ENCODE measurements at regions of chr1 and their contacts with region 1.

Region 1: GRCh38 chr1:40404670-40405462 is 31.3 kb downstream of the SMAP2 start:
- DNase-seq: peak; percentile 75
- H3K4me3 ChIP-seq: no peak overlapping the region
- H3K27ac ChIP-seq: no peak overlapping the region
- H3K4me1 ChIP-seq: no peaks in the 10 kb centered on the region
- H3K27me3 ChIP-seq: no peaks in the 10 kb centered on the region
- CTCF ChIP-seq: peak; percentile 56 to 62
- POLR2A ChIP-seq: no peak

Region 2: DNA sequence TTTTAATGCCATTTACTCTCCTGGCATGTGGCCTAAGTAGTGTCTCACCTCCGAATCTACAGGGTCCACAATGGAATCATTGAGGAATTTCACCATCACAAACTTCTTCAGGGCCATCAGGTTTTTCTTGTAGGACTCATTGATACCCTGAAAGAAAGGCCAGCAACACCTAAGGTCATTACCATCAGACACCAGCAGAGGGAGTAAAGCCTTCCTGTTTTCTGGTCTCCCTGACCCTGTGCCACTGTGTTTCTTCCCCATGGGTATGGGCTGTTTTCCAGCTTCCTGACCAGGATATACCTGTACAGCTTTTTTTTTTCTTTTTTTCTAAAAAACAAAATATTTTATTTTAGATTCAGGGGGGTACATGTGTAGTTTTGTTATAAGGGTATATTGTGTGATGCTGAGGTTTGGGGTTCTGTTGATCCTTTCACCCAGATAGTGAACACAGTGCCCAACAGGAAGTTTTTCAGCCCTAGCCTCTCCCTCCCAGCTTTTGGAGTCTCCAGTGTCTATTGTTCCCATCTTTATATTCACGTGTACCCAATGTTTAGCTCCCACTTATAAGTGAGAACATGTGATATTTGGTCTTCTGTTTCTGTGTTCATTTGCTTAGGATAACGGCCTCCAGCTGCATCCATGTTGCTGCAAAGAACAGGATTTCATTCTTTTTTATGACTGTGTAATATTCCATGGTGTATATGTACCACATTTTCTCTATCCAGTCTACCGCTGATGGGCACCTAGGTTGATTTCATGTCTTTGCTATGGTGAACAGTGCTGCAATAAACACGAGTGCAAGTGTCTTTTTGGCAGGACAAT is 326.1 kb before region 1 on chr1:
- CTCF ChIA-PET with region 1: interaction called, 24 read pairs
- POLR2A ChIA-PET with region 1: no interaction called
- dilution Hi-C with region 1: no loop called
- intact Hi-C with region 1: no loop called
- DNase-seq: peak; percentile 60
- H3K4me3 ChIP-seq: no peak overlapping the region
- H3K27ac ChIP-seq: no peak overlapping the region
- H3K4me1 ChIP-seq: no peaks in the 10 kb centered on the region
- H3K27me3 ChIP-seq: no peaks in the 10 kb centered on the region
- CTCF ChIP-seq: peak; percentile 63 to 78
- POLR2A ChIP-seq: no peak

Region 3: DNA sequence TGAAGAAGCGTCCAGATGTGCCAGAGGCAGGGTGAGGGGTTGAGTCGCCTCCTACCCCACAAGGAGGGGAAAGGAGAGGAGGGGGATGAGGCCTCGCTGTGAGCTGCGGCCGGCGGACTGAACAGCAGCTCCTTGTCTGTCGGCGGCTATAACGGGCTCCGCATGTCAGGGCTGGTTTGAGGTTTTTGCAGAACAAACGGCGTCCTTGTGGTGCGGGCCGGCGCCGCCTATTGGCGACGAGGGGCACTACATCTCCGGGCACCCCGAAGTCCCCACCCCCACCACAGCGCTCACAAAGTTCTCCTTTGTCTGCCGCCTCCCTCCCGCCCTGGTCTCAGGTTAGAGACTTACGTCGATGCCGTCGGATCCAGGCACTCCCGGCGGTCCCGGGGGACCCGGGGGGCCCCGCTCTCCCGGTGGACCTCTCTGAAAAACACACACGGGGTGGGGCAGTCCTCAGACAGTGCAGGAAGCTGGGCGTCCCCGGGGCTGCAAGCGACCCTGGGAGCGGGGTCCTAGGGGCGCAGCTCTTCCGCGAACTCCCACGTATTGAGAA is 89.5 kb before region 1 on chr1:
- CTCF ChIA-PET with region 1: interaction called, 14 read pairs
- POLR2A ChIA-PET with region 1: no interaction called
- dilution Hi-C with region 1: no loop called
- intact Hi-C with region 1: no loop called
- DNase-seq: peak; percentile 86
- H3K4me3 ChIP-seq: peak overlapping the region in 2 of 3 experiments; percentile 18 to 24
- H3K27ac ChIP-seq: no peak overlapping the region
- H3K4me1 ChIP-seq: peaks cover 4% of the 10 kb centered on the region
- H3K27me3 ChIP-seq: peaks cover 23 to 33% of the 10 kb centered on the region in 2 experiments
- CTCF ChIP-seq: peak; percentile 92 to 99
- POLR2A ChIP-seq: no peak

Region 4: DNA sequence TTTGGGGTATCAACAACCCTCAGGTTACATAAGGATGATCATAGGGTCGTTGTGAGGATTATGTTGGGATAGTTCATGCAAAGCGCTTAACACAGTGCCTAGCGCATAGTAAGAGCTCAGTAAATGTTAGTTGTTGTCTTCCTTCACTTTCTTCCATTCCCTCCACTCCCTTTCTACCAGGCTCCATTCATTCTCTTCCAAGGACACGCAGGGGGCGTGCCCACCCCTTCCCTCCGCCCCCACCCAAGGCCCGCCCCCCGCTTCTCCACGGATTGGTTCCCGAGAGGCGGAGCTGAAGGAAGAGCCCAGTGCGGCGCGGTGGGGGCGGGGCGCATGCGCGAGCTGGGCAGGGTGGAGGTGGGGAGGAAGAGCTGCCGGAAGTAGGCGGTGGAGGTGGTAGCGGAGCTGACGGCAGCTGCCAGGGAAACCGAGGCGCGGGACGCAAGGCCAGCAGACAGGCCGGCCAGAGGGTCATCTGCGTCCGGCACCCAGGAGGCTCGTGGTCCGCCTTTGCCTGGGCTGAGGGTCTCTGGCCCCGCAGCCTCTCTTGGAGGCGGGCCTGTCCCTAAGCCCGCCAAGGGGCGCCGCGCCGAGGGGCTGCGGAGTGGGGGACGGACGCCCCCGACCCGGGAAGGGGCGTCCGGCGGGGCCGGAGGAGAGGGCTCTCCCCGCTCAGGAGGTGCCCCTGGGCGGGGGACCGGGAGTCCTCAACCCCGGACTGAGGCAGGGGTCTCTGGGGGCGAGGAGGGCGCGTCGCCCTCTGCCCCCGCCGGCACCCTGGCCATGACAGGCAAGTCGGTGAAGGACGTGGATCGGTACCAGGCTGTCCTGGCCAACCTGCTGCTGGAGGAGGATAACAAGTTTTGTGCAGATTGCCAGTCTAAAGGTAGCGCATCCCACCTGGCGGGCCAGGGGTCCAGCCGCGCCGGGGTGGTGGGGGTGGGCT is 31.3 kb before region 1 on chr1 and contains the start of gene SMAP2:
- CTCF ChIA-PET with region 1: interaction called, 24 read pairs
- POLR2A ChIA-PET with region 1: no interaction called
- dilution Hi-C with region 1: no loop called
- intact Hi-C with region 1: no loop called
- DNase-seq: peak; percentile 96
- H3K4me3 ChIP-seq: peak within 1 kb of the TSS; percentile 69 to 90 (median 89)
- H3K27ac ChIP-seq: no peak within 1 kb of the TSS
- H3K4me1 ChIP-seq: peaks cover 7% of the 10 kb centered on the region
- H3K27me3 ChIP-seq: peaks cover 0 to 4% of the 10 kb centered on the region in 2 experiments
- CTCF ChIP-seq: no peak
- POLR2A ChIP-seq: no peak
- total RNA-seq, gene SMAP2: 11.1 and 12.0 TPM in 2 replicates

Region 5: GRCh38 chr1:40421431-40422384 is 16.8 kb after region 1 on chr1:
- CTCF ChIA-PET with region 1: interaction called, 14 read pairs
- POLR2A ChIA-PET with region 1: no interaction called
- dilution Hi-C with region 1: no loop called
- intact Hi-C with region 1: no loop called
- DNase-seq: no peak
- H3K4me3 ChIP-seq: no peak overlapping the region
- H3K27ac ChIP-seq: no peak overlapping the region
- H3K4me1 ChIP-seq: no peaks in the 10 kb centered on the region
- H3K27me3 ChIP-seq: no peaks in the 10 kb centered on the region
- CTCF ChIP-seq: no peak
- POLR2A ChIP-seq: no peak

Measured in endothelial cell of umbilical vein (primary cell).